ENCODE measurements at regions of chr7 and their contacts with region 1.

Region 1: DNA sequence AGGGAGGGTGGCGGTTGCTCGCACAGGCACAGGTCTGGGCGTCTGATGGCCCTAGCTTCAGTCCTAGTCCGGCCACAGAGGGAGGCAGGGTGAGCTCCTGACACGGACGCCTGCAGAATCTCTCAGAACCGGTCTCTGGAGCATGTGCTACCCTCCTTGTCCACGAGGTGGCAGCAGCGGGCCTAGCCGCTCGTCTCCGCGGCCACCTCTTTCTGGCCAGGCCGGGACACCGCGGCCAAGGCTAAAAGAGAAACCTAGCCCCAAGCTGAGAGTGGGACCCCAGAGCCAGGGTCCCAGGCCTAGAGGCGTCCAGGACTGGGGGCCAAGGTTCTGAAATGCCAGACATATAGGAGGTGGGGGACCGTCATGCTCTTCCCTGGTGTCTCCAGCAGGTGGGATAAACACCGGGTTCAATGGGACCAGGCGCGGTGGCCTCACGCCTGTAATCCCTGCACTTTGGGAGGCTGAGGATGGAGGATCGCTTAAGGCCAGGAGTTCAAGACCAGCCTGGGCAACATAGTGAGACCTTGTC is 3.2 kb upstream of the LAT2 start:
- DNase-seq: peak; percentile 87
- CTCF ChIP-seq: peak; percentile 96

Region 2: GRCh38 chr7:74043523-74043951 is 163.1 kb before region 1 on chr7:
- CTCF ChIA-PET with region 1: no interaction called
- POLR2A ChIA-PET with region 1: no interaction called
- DNase-seq: no peak
- CTCF ChIP-seq: no peak

Region 3: GRCh38 chr7:74190274-74190673 is 16.4 kb before region 1 on chr7:
- CTCF ChIA-PET with region 1: interaction called, 39 read pairs
- POLR2A ChIA-PET with region 1: interaction called, 10 read pairs
- DNase-seq: no peak
- CTCF ChIP-seq: no peak

Region 4: DNA sequence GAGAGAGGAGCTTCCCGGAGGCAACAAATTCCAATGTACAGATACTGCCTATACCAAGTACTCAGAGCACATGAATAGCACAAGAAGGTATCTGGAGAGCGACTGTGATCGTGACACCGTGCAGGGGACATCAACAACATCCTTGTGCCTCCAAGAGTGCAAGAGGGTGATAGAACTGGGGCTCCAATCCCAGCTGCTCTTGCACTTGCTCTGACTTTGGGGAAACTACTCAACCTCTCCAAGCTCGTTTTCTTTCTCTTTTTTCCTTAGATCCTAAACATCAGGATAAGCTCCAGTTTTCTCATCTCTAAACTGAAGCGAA is 35.4 kb after region 1 on chr7:
- CTCF ChIA-PET with region 1: interaction called, 15 read pairs
- POLR2A ChIA-PET with region 1: interaction called, 4 read pairs
- DNase-seq: no peak
- CTCF ChIP-seq: no peak

Region 5: GRCh38 chr7:74289018-74289658 is 82.5 kb after region 1 on chr7 and contains the start of gene CLIP2:
- CTCF ChIA-PET with region 1: interaction called, 18 read pairs
- POLR2A ChIA-PET with region 1: interaction called, 4 read pairs
- DNase-seq: peak; percentile 90
- CTCF ChIP-seq: no peak

Region 6: GRCh38 chr7:74401137-74401859 is 194.6 kb after region 1 on chr7:
- CTCF ChIA-PET with region 1: interaction called, 197 read pairs
- POLR2A ChIA-PET with region 1: interaction called, 4 read pairs
- DNase-seq: peak; percentile 82
- CTCF ChIP-seq: peak; percentile 90